ENCODE measurements at regions of chr2 and their contacts with region 1.

Region 1: DNA sequence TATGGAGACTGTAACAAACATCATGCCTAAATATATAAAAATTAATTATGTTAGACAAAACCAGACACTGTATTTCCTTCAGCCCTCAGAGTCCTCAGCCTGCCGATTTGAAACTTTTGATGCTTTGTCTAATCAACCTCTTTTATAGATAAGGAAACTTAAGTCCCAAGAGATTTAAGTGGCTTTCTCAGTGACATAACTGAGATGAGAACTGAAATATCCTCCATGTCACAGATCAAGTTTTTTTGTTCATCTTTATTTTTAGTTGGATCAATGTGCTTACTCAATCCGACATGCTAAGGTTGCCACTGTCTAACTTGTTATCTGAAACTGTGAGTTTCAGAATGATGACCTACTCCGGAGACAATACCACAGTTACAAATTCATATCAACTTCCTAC is 72.3 kb downstream of the BARD1 start:
- DNase-seq: no peak
- H3K4me3 ChIP-seq: no peak overlapping the region
- H3K27ac ChIP-seq: no peak overlapping the region
- H3K4me1 ChIP-seq: no peaks in the 10 kb centered on the region
- H3K27me3 ChIP-seq: no peaks in the 10 kb centered on the region
- CTCF ChIP-seq: no peak
- EP300 ChIP-seq: no peak
- POLR2A ChIP-seq: no peak

Region 2: DNA sequence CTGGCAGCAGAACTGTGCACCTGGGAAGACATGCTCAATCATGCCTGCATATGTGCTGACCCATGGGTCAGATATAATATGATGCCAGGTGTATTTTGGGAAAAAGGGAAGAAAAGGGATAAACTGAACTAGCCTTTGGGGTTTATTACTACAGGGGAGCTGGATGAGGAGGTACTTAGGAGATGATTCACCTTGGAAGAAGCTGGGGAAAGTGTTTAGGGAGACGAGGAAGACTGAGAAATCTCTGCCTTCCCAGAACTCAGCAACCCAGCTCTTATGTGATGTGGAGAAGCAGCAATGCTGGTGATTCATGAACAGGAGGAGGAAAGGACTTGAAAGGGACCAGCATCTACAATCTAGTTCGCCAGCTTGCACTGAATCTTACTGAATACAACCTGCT is 38.0 kb before region 1 on chr2:
- in situ Hi-C with region 1: no loop called
- intact Hi-C with region 1: loop called (anchors 1 kb)
- DNase-seq: no peak
- H3K4me3 ChIP-seq: no peak overlapping the region
- H3K27ac ChIP-seq: no peak overlapping the region
- H3K4me1 ChIP-seq: no peaks in the 10 kb centered on the region
- H3K27me3 ChIP-seq: no peaks in the 10 kb centered on the region
- CTCF ChIP-seq: no peak
- EP300 ChIP-seq: no peak
- POLR2A ChIP-seq: no peak

Region 3: DNA sequence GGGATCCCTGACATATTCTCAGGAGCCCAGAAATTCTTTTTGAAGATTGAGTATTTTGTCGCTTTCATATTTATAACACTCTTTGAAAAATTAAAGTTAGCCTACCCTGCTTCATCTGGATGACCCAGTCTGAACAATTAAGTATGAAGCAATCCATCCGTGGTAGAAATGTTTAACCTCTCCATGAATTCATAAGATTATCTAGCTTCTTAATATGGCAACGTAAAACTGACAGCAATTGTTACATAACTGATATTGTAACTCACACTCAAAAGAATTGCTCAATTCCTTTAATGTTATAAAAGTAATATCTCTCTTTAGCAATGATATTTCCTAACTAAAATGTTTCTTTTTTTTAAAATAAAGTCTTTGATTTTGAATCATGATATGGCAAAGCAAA is 408.4 kb after region 1 on chr2:
- in situ Hi-C with region 1: no loop called
- intact Hi-C with region 1: no loop called
- DNase-seq: no peak
- H3K4me3 ChIP-seq: no peak overlapping the region
- H3K27ac ChIP-seq: no peak overlapping the region
- H3K4me1 ChIP-seq: no peaks in the 10 kb centered on the region
- H3K27me3 ChIP-seq: no peaks in the 10 kb centered on the region
- CTCF ChIP-seq: no peak
- EP300 ChIP-seq: no peak
- POLR2A ChIP-seq: no peak

Measured in transverse colon (tissue), 4 donors.